ENCODE measurements at regions of chr6 and their contacts with region 1.

Region 1: DNA sequence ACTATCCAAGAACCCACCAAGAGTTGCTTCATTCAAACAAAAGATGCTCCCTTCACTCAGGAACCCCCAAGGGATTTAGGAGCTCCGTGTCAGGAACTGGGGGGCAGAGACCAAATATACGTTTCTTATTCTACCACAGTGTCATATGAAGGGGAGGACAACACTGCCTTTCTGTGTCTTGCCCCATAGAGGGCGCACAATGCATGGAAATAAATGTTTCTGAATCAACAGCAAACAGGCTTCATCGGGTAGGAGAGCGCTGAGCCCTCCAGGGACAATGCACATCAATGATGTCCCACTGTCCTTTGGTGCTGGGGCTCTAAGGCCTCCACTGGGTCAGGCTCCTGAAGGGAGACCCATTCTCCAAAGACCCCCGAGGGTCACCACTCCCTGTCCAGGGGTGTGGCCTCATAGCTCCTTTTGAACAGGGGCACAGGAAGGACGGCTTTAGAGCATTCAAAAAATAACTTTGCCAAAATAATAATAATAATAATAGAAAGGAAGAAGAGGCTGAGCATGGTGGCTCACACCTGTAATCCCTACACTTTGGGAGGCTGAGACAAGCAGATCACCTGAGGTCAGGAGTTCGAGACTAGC is 31.1 kb downstream of the PLG start:
- DNase-seq: peak; percentile 36 to 42
- H3K4me3 ChIP-seq: no peak overlapping the region
- H3K4me3 Mint-ChIP-seq: no peak overlapping the region
- H3K27ac Mint-ChIP-seq: no peak overlapping the region
- H3K4me1 ChIP-seq: no peaks in the 10 kb centered on the region
- H3K4me1 Mint-ChIP-seq: no peaks in the 10 kb centered on the region
- H3K27me3 ChIP-seq: no peaks in the 10 kb centered on the region
- H3K27me3 Mint-ChIP-seq: peaks cover 2% of the 10 kb centered on the region
- CTCF ChIP-seq: peak; percentile 62 to 68

Region 2: DNA sequence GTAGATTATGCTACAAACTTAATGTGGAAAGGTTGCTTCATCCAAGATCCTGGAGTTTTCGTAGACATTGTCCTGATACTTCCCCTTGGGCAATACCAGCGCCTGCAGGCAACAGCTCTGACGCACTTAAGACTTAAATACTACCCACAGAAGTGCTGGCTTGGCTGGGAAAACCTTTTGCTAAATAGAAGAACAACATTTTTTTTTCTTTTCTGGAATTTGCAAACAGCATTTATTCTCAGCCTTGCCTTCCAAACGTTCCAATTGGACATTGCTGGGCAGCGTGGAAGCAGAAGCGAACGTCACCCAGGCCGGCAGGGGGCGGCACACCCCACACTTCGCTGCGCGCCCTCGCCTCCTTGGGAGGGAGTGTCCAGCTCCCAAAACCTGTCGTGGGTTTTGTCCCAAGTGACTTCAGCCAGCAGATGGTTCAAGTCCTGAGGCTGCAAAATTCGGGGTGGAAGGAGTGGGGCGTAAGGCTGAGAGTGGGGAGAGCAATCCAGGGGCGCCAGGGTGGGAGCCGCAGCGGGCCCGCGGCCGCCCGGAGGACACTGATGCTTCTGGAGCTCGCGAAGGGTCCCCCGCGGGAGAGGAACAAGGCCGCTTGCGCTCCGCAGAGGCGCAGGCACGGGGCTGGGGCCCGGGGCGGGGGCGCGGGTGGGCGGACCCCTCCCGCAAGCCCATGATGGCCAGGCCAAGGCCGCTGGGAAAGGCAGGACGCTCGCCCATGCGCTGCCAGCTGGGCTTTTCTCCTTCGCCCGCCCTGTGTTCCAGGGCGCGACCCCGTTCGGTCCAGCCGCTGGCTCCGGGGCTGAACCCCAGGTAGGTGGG is 197.6 kb after region 1 on chr6:
- CTCF ChIA-PET with region 1: no interaction called
- POLR2A ChIA-PET with region 1: no interaction called
- intact Hi-C with region 1: loop called (anchors 1 kb)
- DNase-seq: no peak
- H3K4me3 ChIP-seq: no peak overlapping the region
- H3K4me3 Mint-ChIP-seq: no peak overlapping the region
- H3K27ac Mint-ChIP-seq: no peak overlapping the region
- H3K4me1 ChIP-seq: no peaks in the 10 kb centered on the region
- H3K4me1 Mint-ChIP-seq: no peaks in the 10 kb centered on the region
- H3K27me3 ChIP-seq: no peaks in the 10 kb centered on the region
- H3K27me3 Mint-ChIP-seq: peaks cover 3% of the 10 kb centered on the region
- CTCF ChIP-seq: no peak

Region 3: GRCh38 chr6:161139766-161140553 is 406.8 kb after region 1 on chr6:
- CTCF ChIA-PET with region 1: no interaction called
- POLR2A ChIA-PET with region 1: no interaction called
- intact Hi-C with region 1: loop called (anchors 10 kb)
- DNase-seq: peak; percentile 85 to 88
- H3K4me3 ChIP-seq: no peak overlapping the region
- H3K4me3 Mint-ChIP-seq: no peak overlapping the region
- H3K27ac Mint-ChIP-seq: no peak overlapping the region
- H3K4me1 ChIP-seq: peaks cover 4% of the 10 kb centered on the region; the same call in 1 of the 2 replicates
- H3K4me1 Mint-ChIP-seq: no peaks in the 10 kb centered on the region
- H3K27me3 ChIP-seq: no peaks in the 10 kb centered on the region
- H3K27me3 Mint-ChIP-seq: no peaks in the 10 kb centered on the region
- CTCF ChIP-seq: peak; percentile 67 to 86

Measured in Caco-2 (cell line).